Activated B cell treated with CpG ODN at 0.5 μM for 24 hours (primary cell): ENCODE measurements at regions of chr18 and their contacts with region 1.

Region 1: GRCh38 chr18:77108001-77108692 is 24.4 kb downstream of the MBP start:
- DNase-seq: no peak
- ATAC-seq: peak; percentile 59
- H3K4me3 Mint-ChIP-seq: peak overlapping the region; percentile 29
- H3K27ac Mint-ChIP-seq: peak overlapping the region; percentile 77
- H3K4me1 Mint-ChIP-seq: peaks cover 70% of the 10 kb centered on the region
- H3K27me3 Mint-ChIP-seq: no peaks in the 10 kb centered on the region
- CTCF ChIP-seq: no peak

Region 2: GRCh38 chr18:77124452-77124922 is 16.3 kb after region 1 on chr18:
- CTCF ChIA-PET with region 1: interaction called, 4 read pairs
- POLR2A ChIA-PET with region 1: interaction called, 18 read pairs
- intact Hi-C with region 1: loop called (anchors 2 kb)
- DNase-seq: no peak
- ATAC-seq: peak; percentile 43
- H3K4me3 Mint-ChIP-seq: peak overlapping the region; percentile 38
- H3K27ac Mint-ChIP-seq: peak overlapping the region; percentile 77
- H3K4me1 Mint-ChIP-seq: peaks cover 94% of the 10 kb centered on the region
- H3K27me3 Mint-ChIP-seq: no peaks in the 10 kb centered on the region
- CTCF ChIP-seq: no peak

Region 3: GRCh38 chr18:77181953-77182707 is 74.0 kb after region 1 on chr18:
- CTCF ChIA-PET with region 1: no interaction called
- POLR2A ChIA-PET with region 1: no interaction called
- intact Hi-C with region 1: no loop called
- DNase-seq: no peak
- ATAC-seq: no peak
- H3K4me3 Mint-ChIP-seq: no peak overlapping the region
- H3K27ac Mint-ChIP-seq: no peak overlapping the region
- H3K4me1 Mint-ChIP-seq: no peaks in the 10 kb centered on the region
- H3K27me3 Mint-ChIP-seq: peaks cover 2% of the 10 kb centered on the region
- CTCF ChIP-seq: no peak